Activated CD8-positive, alpha-beta memory T cell treated with anti-CD3 and anti-CD28 coated beads, Interleukin-2, amount 10 ng/mL, durations not matched to agents 7 days and 5 days (primary cell): ENCODE measurements at regions of chr1 and their contacts with region 1.

Region 1: DNA sequence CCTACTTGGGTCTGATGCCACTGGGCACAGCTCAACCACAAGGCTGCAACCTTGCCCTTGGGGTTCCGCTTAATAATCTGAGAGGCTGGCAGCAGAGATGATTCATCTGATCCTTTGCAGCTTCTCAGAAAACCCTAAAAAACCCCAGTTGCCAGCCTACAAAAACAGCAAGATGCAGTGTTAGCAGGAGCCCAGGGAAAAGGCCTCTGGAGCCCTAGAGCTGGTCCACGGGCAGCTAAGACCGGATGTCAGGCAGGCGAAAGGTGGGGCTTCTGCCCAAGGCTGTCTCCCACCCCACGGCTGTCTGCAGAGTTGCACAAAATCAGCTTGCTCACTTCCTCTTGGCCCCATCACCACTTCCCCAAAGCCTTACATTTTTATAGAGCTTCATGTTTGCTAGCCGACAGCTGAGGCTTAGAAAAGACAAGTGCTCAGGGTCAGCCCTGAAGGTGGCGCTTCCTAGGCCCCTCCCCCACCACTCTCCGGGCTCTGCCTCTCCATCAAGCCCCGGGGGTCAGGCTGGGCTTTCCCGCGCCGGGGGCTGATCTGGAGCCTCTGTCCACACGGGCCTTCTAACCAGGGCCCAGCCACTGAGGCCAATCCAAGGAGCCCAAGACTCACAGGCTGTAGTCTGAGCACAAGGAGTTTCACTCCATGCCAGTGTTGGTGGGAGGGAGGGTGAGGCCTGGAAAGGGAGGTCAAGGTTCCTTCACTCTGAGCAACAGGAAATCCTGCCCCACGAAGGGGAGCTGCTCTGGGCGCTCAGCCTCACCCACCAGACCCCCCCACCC is 4.2 kb upstream of the ADORA3 start:
- DNase-seq: peak; percentile 89
- ATAC-seq: peak; percentile 70
- H3K4me3 Mint-ChIP-seq: peak overlapping the region; percentile 67
- H3K27ac Mint-ChIP-seq: peak overlapping the region; percentile 94
- H3K4me1 Mint-ChIP-seq: peaks cover 58% of the 10 kb centered on the region
- H3K27me3 Mint-ChIP-seq: no peaks in the 10 kb centered on the region

Region 2: GRCh38 chr1:111448918-111449702 is 58.5 kb before region 1 on chr1 and contains the starts of genes ATP5PB and WDR77:
- CTCF ChIA-PET with region 1: interaction called, 25 read pairs
- DNase-seq: peak; percentile 97
- ATAC-seq: peak; percentile 96
- H3K4me3 Mint-ChIP-seq: peak within 1 kb of the TSS; percentile 98
- H3K27ac Mint-ChIP-seq: peak within 1 kb of the TSS; percentile 94
- H3K4me1 Mint-ChIP-seq: peaks cover 73% of the 10 kb centered on the region
- H3K27me3 Mint-ChIP-seq: no peaks in the 10 kb centered on the region
- total RNA-seq, gene ATP5PB: 215 to 266 TPM
- total RNA-seq, gene WDR77: 29.6 to 37.5 TPM

Region 3: GRCh38 chr1:111570781-111571181 is 63.2 kb after region 1 on chr1:
- CTCF ChIA-PET with region 1: interaction called, 10 read pairs
- DNase-seq: peak; percentile 62
- ATAC-seq: peak; percentile 39
- H3K4me3 Mint-ChIP-seq: no peak overlapping the region
- H3K27ac Mint-ChIP-seq: no peak overlapping the region
- H3K4me1 Mint-ChIP-seq: peaks cover 21% of the 10 kb centered on the region
- H3K27me3 Mint-ChIP-seq: no peaks in the 10 kb centered on the region

Region 4: DNA sequence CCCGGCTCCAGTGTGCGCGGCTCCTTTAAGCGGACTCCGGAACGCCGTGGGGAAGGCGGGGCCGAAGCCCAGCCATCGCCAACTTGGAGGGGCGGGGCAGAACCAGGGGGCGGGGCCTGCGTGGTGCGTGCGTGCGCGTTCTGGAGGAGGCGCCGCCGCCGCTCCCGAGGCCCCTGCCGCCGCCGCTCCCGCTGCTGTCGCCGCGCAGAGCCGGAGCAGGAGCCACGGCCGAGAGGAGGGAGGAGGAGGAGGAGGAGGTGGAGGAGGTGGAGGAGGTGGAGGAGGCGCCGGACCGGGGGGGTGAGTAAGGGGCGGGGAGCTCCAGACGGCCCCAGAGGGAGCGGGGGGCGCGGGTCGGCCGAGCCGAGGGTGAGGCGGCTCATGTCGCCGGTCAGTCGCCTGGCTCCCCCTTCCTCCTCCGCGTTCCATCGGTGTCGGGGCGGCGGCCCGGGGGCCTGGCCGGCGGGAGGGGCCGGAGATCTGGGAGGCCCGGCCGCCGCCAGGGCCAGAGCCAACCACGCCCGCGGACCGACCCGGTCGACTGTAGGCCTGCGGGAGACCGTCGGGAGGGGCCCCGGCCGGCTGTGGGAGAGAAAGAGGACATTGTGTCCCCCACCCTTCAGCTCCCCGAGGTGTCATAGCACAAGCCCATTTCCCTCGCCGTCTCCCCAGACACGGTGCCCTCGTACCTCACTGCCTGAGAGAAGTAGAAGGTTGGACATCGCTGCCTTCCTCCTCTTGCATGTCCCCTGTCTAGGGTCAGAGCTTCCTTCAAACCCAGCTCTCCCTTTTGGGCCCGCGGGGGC is 112.2 kb after region 1 on chr1 and contains the start of gene RAP1A:
- CTCF ChIA-PET with region 1: interaction called, 101 read pairs
- DNase-seq: peak; percentile 96
- ATAC-seq: peak; percentile 78
- H3K4me3 Mint-ChIP-seq: peak within 1 kb of the TSS; percentile 94
- H3K27ac Mint-ChIP-seq: peak within 1 kb of the TSS; percentile 92
- H3K4me1 Mint-ChIP-seq: peaks cover 68% of the 10 kb centered on the region
- H3K27me3 Mint-ChIP-seq: no peaks in the 10 kb centered on the region
- total RNA-seq, gene RAP1A: 161 to 224 TPM

Region 5: DNA sequence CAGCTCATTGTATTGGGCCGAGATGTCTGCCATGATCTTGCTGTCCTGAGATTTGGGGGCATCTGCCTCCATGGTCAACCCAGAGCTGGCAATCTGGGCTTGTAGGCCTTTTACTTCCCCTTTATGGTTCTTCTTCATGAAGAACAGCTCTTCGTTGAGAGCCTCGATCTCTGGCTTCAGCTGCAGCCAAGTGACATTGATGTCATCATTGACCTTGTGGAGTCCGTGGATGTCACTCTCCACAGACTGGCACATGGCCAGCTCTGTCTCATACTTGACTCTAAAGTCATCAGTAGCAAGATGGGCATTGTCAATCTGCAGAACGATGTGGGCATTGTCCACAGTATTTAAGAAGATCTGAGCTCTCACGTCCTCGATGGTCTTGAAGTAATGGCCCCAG is 141.2 kb after region 1 on chr1:
- CTCF ChIA-PET with region 1: interaction called, 19 read pairs
- DNase-seq: no peak
- ATAC-seq: no peak
- H3K4me3 Mint-ChIP-seq: no peak overlapping the region
- H3K27ac Mint-ChIP-seq: no peak overlapping the region
- H3K4me1 Mint-ChIP-seq: peaks cover 71% of the 10 kb centered on the region
- H3K27me3 Mint-ChIP-seq: no peaks in the 10 kb centered on the region

Region 6: GRCh38 chr1:111690306-111690617 is 182.7 kb after region 1 on chr1:
- CTCF ChIA-PET with region 1: interaction called, 12 read pairs
- DNase-seq: no peak
- ATAC-seq: no peak
- H3K4me3 Mint-ChIP-seq: no peak overlapping the region
- H3K27ac Mint-ChIP-seq: peak overlapping the region; percentile 25
- H3K4me1 Mint-ChIP-seq: peaks cover 43% of the 10 kb centered on the region
- H3K27me3 Mint-ChIP-seq: no peaks in the 10 kb centered on the region

Region 7: DNA sequence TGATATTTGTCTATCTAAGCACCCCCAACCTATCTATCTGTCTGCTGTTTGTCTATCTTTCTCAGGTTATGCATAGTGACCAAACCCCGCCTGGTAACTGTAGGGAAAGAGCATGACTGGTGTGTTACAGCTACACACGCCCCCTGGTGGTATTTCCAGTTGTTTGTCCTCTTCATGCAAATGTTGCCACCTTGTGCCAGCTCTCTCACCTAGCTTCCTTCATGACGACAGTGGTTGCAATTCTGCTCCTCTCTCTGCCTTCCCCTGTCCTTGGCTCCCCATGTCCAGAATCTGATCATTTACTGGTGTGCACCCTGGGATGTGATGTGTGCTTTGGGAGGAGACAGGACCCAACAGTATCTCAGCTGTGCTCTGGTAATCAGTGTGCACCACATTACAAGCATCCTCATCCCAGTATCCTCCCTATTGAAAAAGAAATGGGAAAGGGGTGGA is 239.7 kb after region 1 on chr1:
- CTCF ChIA-PET with region 1: interaction called, 49 read pairs
- DNase-seq: peak; percentile 84
- ATAC-seq: peak; percentile 91
- H3K4me3 Mint-ChIP-seq: no peak overlapping the region
- H3K27ac Mint-ChIP-seq: no peak overlapping the region
- H3K4me1 Mint-ChIP-seq: peaks cover 10% of the 10 kb centered on the region
- H3K27me3 Mint-ChIP-seq: peaks cover 8% of the 10 kb centered on the region